Mammary epithelial cell (primary cell): ENCODE measurements at regions of chr4 and their contacts with region 1.

Region 1: DNA sequence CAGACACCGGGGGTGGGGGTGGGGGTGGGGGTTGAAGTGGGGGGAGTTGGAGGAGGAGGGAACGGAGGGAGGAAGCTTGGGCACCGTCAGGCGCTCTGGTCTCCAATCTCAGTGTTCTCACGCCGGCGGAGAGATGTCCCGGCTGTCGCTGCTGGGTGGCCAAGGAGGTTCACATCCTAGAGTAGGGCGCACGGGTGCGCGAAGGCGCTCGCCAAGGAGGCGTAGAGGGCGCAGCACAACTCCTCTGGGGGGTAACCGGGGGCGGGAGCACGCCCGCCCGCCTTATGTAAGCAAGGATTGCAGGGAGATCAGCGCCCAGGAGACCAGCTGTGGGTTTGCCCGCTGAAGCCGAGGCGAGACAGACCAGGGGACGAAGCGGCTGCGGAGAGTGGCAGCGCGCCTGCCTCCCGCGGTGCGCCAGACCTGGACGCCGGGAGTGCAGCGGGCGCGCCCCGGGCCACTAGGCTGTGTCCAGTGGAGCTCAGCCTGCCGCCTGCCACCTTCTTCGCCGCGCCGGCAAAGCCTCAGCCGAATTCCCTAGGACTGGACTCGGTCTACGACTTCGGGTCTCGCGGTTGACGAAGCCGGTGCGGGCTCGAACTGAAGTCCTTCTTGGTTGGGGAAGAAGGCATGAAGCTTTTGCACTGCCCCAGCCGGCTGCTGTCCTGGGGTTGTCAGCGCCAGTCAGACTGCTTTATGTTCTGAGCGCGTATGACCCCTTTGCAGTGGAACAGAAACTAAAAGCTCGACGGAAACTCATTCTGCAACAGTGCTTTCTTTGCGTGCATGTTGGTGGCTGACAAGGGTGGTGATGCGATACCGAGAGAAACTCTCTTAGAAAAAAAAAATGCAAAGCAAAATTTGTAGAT is 707 bp upstream of the UNC5C start:
- DNase-seq: peak; percentile 60
- H3K4me3 ChIP-seq: peak overlapping the region; percentile 70 to 81 (median 71)
- H3K27ac ChIP-seq: peak overlapping the region; percentile 49
- H3K4me1 ChIP-seq: peaks cover 4% of the 10 kb centered on the region
- H3K27me3 ChIP-seq: peaks cover 19% of the 10 kb centered on the region
- CTCF ChIP-seq: no peak

Region 2: DNA sequence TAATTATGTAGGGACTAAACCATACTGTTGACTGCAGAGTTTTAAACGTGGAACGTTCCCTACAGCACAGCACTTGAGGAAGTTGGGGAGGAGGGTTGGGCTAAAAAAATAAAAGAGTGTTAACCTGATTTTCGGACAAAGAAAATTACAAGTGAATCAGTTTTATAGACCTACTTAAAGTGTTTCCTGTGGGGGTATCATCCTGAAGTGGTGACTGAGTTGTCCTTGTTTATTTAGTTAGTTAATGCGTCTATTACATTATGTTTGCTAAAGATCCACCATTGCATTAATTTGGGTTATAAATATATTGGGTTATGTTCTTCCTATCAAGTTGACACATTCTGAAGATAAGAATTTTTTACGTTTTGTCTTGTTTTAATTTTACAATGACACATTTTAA is 15.4 kb before region 1 on chr4:
- CTCF ChIA-PET with region 1: no interaction called
- dilution Hi-C with region 1: no loop called
- in situ Hi-C with region 1: no loop called
- intact Hi-C with region 1: loop called (anchors 1 kb)
- DNase-seq: no peak
- H3K4me3 ChIP-seq: no peak overlapping the region
- H3K27ac ChIP-seq: no peak overlapping the region
- H3K4me1 ChIP-seq: peaks cover 3% of the 10 kb centered on the region
- H3K27me3 ChIP-seq: no peaks in the 10 kb centered on the region
- CTCF ChIP-seq: no peak

Region 3: DNA sequence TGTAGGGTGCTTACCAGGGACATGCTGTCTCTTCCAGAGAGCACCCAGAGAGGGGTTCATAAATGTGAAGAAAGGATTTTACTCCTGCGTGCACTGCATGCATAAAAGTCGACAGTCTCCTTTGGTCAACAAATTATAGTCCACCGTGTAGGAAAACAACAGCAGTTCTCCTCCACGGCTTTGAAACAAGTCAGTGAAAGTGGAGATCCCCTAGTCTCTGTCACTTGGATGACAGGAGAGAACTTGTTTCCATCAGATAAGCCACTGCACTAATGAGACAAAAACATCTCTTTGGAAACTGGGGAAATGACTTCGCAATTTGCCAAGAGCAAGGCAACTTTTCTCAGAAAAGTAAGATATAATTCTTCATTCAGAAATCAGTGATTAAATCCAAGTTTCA is 10.4 kb before region 1 on chr4:
- CTCF ChIA-PET with region 1: no interaction called
- dilution Hi-C with region 1: no loop called
- in situ Hi-C with region 1: no loop called
- intact Hi-C with region 1: loop called (anchors 1 kb)
- DNase-seq: peak; percentile 77
- H3K4me3 ChIP-seq: peak overlapping the region in 1 of 3 experiments; percentile 2
- H3K27ac ChIP-seq: peak overlapping the region; percentile 77
- H3K4me1 ChIP-seq: peaks cover 3% of the 10 kb centered on the region
- H3K27me3 ChIP-seq: no peaks in the 10 kb centered on the region
- CTCF ChIP-seq: no peak

Region 4: DNA sequence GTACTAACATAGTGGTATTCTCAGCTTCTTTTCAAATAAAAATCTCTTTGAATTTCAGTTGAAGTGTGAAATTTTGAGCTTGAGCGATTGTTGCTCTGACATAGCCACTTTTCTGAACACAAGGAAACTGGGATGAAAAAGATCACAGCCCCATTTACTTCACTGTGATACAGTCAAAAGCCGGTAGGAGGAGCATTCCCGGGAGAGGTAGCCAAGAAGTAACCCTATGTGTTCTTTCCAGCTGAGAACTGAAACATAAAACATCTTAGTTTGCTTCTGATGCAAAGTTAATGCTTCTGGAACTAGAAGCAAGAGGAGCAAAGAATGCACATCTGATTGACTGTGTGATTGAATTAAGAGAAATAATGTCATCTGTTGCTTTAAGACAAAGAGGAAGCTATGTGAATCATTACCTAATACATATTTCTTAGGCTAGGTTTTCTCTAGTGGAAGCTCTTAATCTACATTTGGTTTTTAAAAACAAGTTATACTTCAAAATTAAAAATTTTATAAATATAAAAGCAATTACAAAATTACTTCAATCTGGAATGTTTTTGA is 87.6 kb after region 1 on chr4:
- CTCF ChIA-PET with region 1: interaction called, 3 read pairs
- dilution Hi-C with region 1: no loop called
- in situ Hi-C with region 1: no loop called
- intact Hi-C with region 1: loop called (anchors 5 kb)
- DNase-seq: peak; percentile 6
- H3K4me3 ChIP-seq: no peak overlapping the region
- H3K27ac ChIP-seq: no peak overlapping the region
- H3K4me1 ChIP-seq: no peaks in the 10 kb centered on the region
- H3K27me3 ChIP-seq: no peaks in the 10 kb centered on the region
- CTCF ChIP-seq: peak; percentile 55 to 69

Region 5: GRCh38 chr4:95693594-95693993 is 144.1 kb after region 1 on chr4:
- CTCF ChIA-PET with region 1: interaction called, 3 read pairs
- dilution Hi-C with region 1: no loop called
- in situ Hi-C with region 1: no loop called
- intact Hi-C with region 1: loop called (anchors 10 kb)
- DNase-seq: peak; percentile 48
- H3K4me3 ChIP-seq: no peak overlapping the region
- H3K27ac ChIP-seq: no peak overlapping the region
- H3K4me1 ChIP-seq: peaks cover 4% of the 10 kb centered on the region
- H3K27me3 ChIP-seq: no peaks in the 10 kb centered on the region
- CTCF ChIP-seq: peak; percentile 60 to 67

Region 6: DNA sequence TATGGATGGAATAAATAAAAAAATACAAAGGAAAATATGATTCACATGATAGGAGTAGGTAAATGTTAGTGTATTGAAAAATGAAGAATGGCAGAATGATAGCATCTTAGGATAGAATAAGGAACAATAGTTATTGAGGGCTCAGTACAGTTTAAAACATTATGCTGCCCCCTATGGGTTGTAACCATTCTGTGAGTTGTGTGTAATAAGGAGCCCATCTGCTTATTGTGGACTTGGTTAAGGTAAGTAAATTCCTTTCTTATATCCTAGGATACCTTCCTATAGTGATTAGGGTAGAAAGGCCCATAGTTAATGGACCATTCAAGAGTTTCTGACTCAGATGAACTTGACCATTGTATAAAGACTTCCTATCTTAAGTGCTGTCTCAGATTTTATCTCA is 486.2 kb after region 1 on chr4:
- CTCF ChIA-PET with region 1: no interaction called
- dilution Hi-C with region 1: no loop called
- in situ Hi-C with region 1: no loop called
- intact Hi-C with region 1: loop called (anchors 2 kb)
- DNase-seq: peak; percentile 39
- H3K4me3 ChIP-seq: no peak overlapping the region
- H3K27ac ChIP-seq: no peak overlapping the region
- H3K4me1 ChIP-seq: no peaks in the 10 kb centered on the region
- H3K27me3 ChIP-seq: no peaks in the 10 kb centered on the region
- CTCF ChIP-seq: peak; percentile 43 to 70

Region 7: DNA sequence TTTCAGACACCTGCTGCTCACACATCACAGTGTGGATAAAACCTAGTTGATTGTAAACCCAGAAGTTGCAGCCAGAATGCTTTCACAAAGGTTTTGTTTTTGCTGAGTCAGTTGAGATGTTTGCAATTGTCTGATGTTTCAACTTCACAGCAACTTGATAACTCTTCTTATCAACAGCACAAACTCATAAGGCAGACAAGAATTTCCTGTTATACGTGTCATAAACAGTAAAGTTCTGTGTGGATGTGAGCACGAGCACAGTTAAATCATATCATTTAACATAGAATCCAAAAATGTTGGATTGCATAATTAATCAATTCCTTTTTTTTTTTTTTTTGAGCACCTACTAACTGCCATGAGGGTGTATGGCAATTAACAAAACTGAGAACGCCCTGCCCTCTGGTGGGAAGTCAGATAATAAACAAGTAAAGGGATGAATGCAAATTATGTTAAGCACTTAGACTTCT is 802.6 kb after region 1 on chr4:
- CTCF ChIA-PET with region 1: no interaction called
- dilution Hi-C with region 1: no loop called
- in situ Hi-C with region 1: no loop called
- intact Hi-C with region 1: loop called (anchors 2 kb)
- DNase-seq: peak; percentile 14
- H3K4me3 ChIP-seq: no peak overlapping the region
- H3K27ac ChIP-seq: no peak overlapping the region
- H3K4me1 ChIP-seq: peaks cover 6% of the 10 kb centered on the region
- H3K27me3 ChIP-seq: peaks cover 2% of the 10 kb centered on the region
- CTCF ChIP-seq: peak; percentile 14 to 50